ENCODE measurements at regions of chrX and their contacts with region 1.

Region 1: GRCh38 chrX:49754233-49754857 is 58.6 kb upstream of the PAGE1 start:
- DNase-seq: peak in 2 of 5 donors; percentile 7 to 16
- ATAC-seq: peak in 2 of 4 donors; percentile 45 to 48
- H3K4me3 ChIP-seq: no peak overlapping the region
- H3K27ac ChIP-seq: no peak overlapping the region
- H3K4me1 ChIP-seq: no peaks in the 10 kb centered on the region
- H3K27me3 ChIP-seq: peaks cover 0 to 49% (median 0%) of the 10 kb centered on the region in 9 donors
- CTCF ChIP-seq: peak; percentile 40 to 68 (median 53)
- POLR2A ChIP-seq: no peak

Region 2: GRCh38 chrX:49139713-49140112 is 614.6 kb before region 1 on chrX:
- intact Hi-C with region 1: loop called in 1 of 10 experiments (anchors 10 kb)
- DNase-seq: no peak
- ATAC-seq: no peak
- H3K4me3 ChIP-seq: no peak overlapping the region
- H3K27ac ChIP-seq: no peak overlapping the region
- H3K4me1 ChIP-seq: no peaks in the 10 kb centered on the region
- H3K27me3 ChIP-seq: no peaks in the 10 kb centered on the region
- CTCF ChIP-seq: no peak
- POLR2A ChIP-seq: no peak

Region 3: DNA sequence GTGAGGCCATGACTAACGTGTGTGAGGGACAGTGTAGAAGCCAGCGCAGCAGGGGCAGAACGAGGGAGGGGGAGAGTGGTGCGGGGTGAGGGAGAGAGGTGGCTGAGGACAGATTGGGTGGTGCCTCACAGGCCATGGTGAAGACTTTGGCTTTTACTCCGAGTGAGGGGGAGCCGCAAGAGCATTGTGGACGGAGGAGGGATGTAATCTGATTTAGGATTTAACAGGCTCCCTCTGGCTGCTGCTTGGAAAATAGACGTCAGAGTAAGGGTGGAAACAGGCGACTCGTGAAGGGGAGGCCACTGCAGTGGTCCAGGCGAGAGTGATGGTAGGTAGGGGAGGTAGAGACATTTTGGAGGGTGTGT is 471.7 kb before region 1 on chrX:
- intact Hi-C with region 1: loop called in 2 of 10 experiments (anchors 5 to 10 kb)
- DNase-seq: no peak
- ATAC-seq: peak; percentile 42 to 79 (median 69)
- H3K4me3 ChIP-seq: no peak overlapping the region
- H3K27ac ChIP-seq: no peak overlapping the region
- H3K4me1 ChIP-seq: peaks cover 0 to 7% (median 0%) of the 10 kb centered on the region in 12 donors
- H3K27me3 ChIP-seq: peaks cover 0 to 6% (median 0%) of the 10 kb centered on the region in 9 donors
- CTCF ChIP-seq: peak in 7 of 12 donors; percentile 11 to 40 (median 28)
- POLR2A ChIP-seq: no peak

Region 4: GRCh38 chrX:49291615-49292337 is 462.6 kb before region 1 on chrX:
- intact Hi-C with region 1: loop called in 6 of 10 experiments (anchors 5 to 10 kb)
- DNase-seq: peak in 2 of 5 donors; percentile 46 to 50
- ATAC-seq: peak in 3 of 4 donors; percentile 56 to 80 (median 66)
- H3K4me3 ChIP-seq: no peak overlapping the region
- H3K27ac ChIP-seq: no peak overlapping the region
- H3K4me1 ChIP-seq: peaks cover 0 to 7% (median 0%) of the 10 kb centered on the region in 12 donors
- H3K27me3 ChIP-seq: no peaks in the 10 kb centered on the region
- CTCF ChIP-seq: peak; percentile 40 to 63 (median 54)
- POLR2A ChIP-seq: no peak

Region 5: GRCh38 chrX:49695276-49696180 is 58.8 kb before region 1 on chrX and contains the start of gene PAGE1:
- intact Hi-C with region 1: no loop called
- DNase-seq: no peak
- ATAC-seq: no peak
- H3K4me3 ChIP-seq: no peak within 1 kb of the TSS
- H3K27ac ChIP-seq: no peak within 1 kb of the TSS
- H3K4me1 ChIP-seq: no peaks in the 10 kb centered on the region
- H3K27me3 ChIP-seq: peaks cover 0 to 5% (median 0%) of the 10 kb centered on the region in 9 donors
- CTCF ChIP-seq: no peak
- POLR2A ChIP-seq: no peak
- total RNA-seq, gene PAGE1: not detected

Region 6: DNA sequence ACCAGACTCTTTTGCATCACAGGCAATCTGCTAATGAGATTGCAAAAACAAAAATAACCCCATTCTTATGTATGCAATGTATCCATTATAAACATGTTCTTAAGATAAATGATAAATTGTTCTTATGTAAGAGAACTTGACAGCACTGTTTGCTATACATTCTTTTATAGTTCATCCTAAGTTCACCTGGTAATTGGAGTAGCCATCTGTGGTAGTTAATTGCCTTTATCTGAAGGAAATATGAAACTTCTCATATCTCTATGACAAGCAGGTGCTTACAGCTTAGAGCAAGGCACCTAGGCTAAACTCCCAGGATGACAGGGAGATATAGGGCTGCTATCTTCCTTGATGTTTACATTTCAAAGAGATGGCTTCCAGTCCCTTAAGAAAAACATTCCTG is 146.7 kb after region 1 on chrX:
- intact Hi-C with region 1: no loop called
- DNase-seq: no peak
- ATAC-seq: no peak
- H3K4me3 ChIP-seq: no peak overlapping the region
- H3K27ac ChIP-seq: no peak overlapping the region
- H3K4me1 ChIP-seq: no peaks in the 10 kb centered on the region
- H3K27me3 ChIP-seq: peaks cover 0 to 42% (median 0%) of the 10 kb centered on the region in 9 donors
- CTCF ChIP-seq: no peak
- POLR2A ChIP-seq: no peak

Measured in heart left ventricle (tissue), 16 donors.